H1 (cell line): ENCODE measurements at regions of chr2 and their contacts with region 1.

Region 1: DNA sequence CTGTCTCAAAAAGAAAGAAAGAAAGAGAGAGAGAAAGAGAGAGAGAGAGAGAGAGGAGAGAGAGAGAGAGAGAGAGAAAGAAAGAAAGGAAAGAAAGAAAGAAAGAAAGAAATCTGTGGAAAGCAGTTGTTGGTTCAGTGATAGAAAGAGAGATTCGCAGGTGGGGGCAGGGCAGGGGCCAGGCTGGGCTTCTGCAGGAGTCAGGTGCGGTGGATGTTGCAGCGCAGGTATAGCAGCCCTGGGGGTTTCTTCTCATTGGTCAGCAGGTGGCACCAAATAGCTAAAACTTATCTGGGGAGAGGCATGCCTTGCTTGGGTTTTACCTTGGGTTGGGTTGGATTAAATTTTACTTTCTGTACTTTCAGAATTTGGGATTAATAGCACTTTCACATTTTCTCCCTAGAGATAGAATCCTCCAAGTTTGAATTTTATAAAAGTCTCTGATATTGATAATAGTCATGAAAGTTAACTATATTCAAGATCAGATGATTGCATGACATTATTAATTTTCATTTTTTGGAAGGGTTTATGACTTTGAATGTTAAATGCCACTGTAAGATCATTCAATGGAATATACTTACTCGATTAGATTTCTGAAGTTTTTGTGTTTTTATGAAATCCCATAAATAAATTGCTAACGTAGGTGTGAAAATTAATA is 66.6 kb downstream of the SPTBN1 start:
- DNase-seq: peak; percentile 50 to 68
- H3K4me3 ChIP-seq: no peak overlapping the region
- H3K27ac ChIP-seq: no peak overlapping the region
- H3K4me1 ChIP-seq: peaks cover 0 to 3% (median under 1%) of the 10 kb centered on the region in 4 experiments; a peak in 3 of 7 replicates
- H3K27me3 ChIP-seq: no peaks in the 10 kb centered on the region
- CTCF ChIP-seq: peak; percentile 62 to 77 (median 76)
- EP300 ChIP-seq: no peak
- POLR2A ChIP-seq: no peak
- RAD21 ChIP-seq: peak; percentile 87 to 90

Region 2: DNA sequence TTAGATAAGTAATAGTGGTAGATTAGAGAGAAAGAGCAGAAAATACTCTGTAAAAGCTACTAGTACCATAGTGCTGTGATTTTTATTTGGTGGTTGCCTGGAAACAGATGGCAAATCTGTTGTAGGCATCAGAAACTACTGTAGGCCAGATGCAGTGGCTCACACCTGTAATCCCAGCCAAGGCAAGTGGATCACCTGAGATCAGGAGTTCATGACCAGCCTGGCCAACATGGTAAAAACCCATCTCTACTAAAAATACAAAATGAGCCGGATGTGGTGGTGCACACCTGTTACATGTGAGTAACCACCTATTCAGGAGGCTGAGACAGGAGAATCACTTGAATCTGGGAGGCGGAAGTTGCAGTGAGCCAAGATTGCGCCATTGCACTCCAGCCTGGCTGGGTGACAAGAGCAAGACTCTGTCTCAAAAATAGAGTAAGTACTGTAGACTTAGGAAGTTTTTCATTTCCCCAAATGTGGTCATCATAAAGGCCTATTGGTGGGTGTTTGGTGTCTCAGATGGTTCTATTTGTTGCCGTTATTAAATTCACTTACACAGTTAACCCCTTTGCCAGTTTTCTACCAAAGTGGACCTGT is 12.9 kb after region 1 on chr2:
- CTCF ChIA-PET with region 1: interaction called, 12 read pairs
- POLR2A ChIA-PET with region 1: no interaction called
- DNase-seq: no peak
- H3K4me3 ChIP-seq: no peak overlapping the region
- H3K27ac ChIP-seq: no peak overlapping the region
- H3K4me1 ChIP-seq: no peaks in the 10 kb centered on the region
- H3K27me3 ChIP-seq: no peaks in the 10 kb centered on the region
- CTCF ChIP-seq: no peak
- EP300 ChIP-seq: no peak
- POLR2A ChIP-seq: no peak
- RAD21 ChIP-seq: no peak

Region 3: GRCh38 chr2:54624591-54625071 is 101.9 kb after region 1 on chr2:
- CTCF ChIA-PET with region 1: interaction called, 39 read pairs
- POLR2A ChIA-PET with region 1: no interaction called
- DNase-seq: no peak
- H3K4me3 ChIP-seq: no peak overlapping the region
- H3K27ac ChIP-seq: no peak overlapping the region
- H3K4me1 ChIP-seq: no peaks in the 10 kb centered on the region
- H3K27me3 ChIP-seq: no peaks in the 10 kb centered on the region
- CTCF ChIP-seq: no peak
- EP300 ChIP-seq: no peak
- POLR2A ChIP-seq: no peak
- RAD21 ChIP-seq: no peak

Region 4: DNA sequence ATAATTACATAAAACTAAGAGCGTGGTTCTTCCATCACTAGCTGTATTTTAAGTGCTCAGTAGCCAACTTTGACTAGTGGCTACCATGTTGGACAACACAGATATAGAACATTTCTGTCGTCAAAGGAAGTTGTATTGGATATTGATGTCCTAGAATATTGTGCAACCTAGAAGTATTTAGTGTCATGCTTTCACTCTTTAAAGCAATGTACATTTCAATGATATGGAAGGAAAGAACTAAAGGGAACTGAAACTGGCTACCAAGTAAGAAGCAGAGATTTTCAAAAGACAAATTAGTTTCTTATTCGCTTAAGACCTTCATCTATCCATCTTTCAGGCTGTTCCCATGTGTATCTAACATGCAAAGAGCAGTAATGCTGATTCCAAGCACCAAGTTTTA is 115.3 kb after region 1 on chr2:
- CTCF ChIA-PET with region 1: interaction called, 16 read pairs
- POLR2A ChIA-PET with region 1: no interaction called
- DNase-seq: no peak
- H3K4me3 ChIP-seq: no peak overlapping the region
- H3K27ac ChIP-seq: no peak overlapping the region
- H3K4me1 ChIP-seq: peaks cover 0 to 3% (median 0%) of the 10 kb centered on the region in 4 experiments; a peak in 1 of 7 replicates
- H3K27me3 ChIP-seq: no peaks in the 10 kb centered on the region
- CTCF ChIP-seq: no peak
- EP300 ChIP-seq: no peak
- POLR2A ChIP-seq: no peak
- RAD21 ChIP-seq: no peak